K562 (cell line): ENCODE measurements at regions of chr2 and their contacts with region 1.

Region 1: DNA sequence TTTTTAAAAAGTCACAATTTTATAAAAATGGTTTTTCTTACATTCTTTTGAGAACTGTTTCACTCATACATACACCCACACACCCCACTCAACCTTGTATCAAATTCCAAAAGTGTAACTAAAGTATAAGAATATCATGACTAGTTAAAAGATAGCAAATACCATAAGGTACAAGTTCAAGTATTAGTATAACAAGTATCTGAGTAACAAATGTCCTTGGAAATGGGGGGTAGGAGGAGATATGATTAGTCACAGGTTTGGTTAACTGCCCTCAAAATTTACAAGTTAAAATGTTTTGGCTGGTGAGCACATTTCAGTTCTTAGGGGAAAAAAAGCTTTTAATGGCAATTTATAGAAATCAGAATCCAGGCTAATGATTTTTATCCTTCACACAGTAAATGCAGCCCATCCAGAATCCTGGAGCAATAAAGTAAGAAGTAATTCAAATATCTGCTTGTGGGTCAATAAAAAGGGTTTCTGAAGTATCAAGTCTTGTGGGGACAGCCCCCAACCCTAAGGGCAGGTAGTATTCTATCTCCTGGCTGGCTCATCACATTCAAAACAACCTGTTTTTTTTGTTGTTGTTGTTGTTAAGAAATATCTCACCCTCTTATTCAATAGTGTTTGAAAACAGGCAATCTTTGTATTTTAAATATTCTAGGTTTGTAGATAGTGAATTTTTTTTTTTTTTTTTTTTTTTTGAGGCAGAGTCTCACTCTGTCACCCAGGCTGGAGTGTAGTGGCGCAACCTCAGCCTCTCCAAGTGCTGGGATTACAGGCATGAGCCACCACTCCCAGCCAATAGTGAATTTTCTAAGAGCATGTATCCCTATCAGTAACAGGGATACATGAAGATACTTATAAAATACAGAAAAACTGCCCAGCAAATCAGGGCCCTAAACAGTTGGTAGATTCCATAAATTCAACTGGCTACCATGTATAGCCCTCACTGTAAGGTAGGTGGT is 14.5 kb downstream of the IAH1 start:
- DNase-seq: no peak
- ATAC-seq: no peak
- H3K4me3 ChIP-seq: no peak overlapping the region
- H3K27ac ChIP-seq: no peak overlapping the region
- H3K4me1 ChIP-seq: no peaks in the 10 kb centered on the region
- H3K27me3 ChIP-seq: no peaks in the 10 kb centered on the region
- CTCF ChIP-seq: no peak
- EP300 ChIP-seq: no peak
- POLR2A ChIP-seq: no peak
- RAD21 ChIP-seq: no peak

Region 2: GRCh38 chr2:9347411-9347881 is 141.4 kb before region 1 on chr2:
- CTCF ChIA-PET with region 1: no interaction called
- POLR2A ChIA-PET with region 1: no interaction called
- in situ Hi-C with region 1: no loop called
- intact Hi-C with region 1: no loop called
- DNase-seq: no peak
- ATAC-seq: no peak
- H3K4me3 ChIP-seq: no peak overlapping the region
- H3K27ac ChIP-seq: no peak overlapping the region
- H3K4me1 ChIP-seq: peaks cover 0 to 3% of the 10 kb centered on the region in 2 experiments; a peak in 1 of 5 replicates
- H3K27me3 ChIP-seq: peaks cover 2 to 10% of the 10 kb centered on the region in 2 experiments; a peak in 1 of 5 replicates
- CTCF ChIP-seq: no peak
- EP300 ChIP-seq: no peak
- POLR2A ChIP-seq: no peak
- RAD21 ChIP-seq: no peak

Region 3: DNA sequence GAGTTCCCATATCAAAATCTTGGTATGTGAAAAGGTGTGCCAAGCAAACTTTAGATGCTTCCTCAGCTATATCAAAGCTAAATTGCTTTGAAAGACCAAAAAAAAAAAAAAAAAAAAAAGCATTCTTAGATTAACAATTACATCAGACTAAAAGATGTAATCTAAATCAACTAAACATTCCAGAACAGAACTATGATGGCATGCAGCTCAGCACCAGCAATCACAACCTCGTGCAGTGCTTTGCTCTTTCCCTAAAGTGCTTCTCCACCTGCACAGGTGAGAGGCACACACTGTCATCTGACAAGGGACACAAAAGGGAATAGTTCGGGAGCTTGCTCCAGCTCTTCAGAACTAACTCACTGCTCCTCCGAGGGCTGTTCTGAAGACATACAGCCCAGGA is 29.3 kb after region 1 on chr2:
- CTCF ChIA-PET with region 1: no interaction called
- POLR2A ChIA-PET with region 1: interaction called, 13 read pairs
- in situ Hi-C with region 1: no loop called
- intact Hi-C with region 1: no loop called
- DNase-seq: no peak
- ATAC-seq: peak; percentile 25; the same call in 2 of the 3 replicates
- H3K4me3 ChIP-seq: no peak overlapping the region
- H3K27ac ChIP-seq: no peak overlapping the region
- H3K4me1 ChIP-seq: peaks cover 0 to 14% of the 10 kb centered on the region in 2 experiments; a peak in 3 of 5 replicates
- H3K27me3 ChIP-seq: no peaks in the 10 kb centered on the region
- CTCF ChIP-seq: no peak
- EP300 ChIP-seq: no peak
- POLR2A ChIP-seq: no peak
- RAD21 ChIP-seq: no peak

Region 4: DNA sequence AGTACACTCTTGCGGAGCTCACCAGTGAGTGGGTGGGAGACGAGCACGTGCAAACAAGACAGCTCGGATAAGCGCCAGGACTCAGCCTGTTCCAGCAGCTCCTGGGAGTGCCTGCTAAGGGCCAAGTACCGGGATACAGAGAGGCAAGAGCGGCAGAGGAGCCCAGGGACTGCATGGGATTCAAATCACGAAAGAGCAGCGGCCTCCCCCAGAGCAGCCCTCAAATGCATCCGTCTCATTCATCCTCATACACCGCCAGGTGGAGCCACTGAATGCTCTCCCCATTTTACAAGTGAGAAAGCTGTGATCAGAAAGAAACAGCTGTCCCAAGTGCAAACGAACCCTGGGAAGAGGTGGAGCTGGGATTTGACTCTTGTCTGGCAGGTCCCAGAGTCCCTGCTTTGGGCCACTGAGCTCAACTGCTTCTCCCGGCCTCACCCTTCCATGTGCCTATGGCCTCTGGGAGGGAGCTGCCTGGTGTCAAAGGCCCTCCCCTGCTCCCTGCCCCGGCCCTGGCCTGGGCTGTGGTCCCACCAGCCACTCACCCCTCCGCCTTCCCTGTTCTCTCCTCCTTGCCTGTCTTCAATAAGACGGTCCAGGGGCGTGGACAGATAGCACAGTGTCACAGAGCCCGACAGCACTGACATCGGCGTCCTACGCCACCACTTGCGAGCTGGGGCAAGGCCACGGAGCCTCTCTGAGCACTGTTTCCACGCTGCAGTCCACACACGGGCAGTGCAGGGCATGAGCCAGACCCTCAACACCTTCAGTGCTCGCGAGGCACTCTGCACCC is 281.6 kb after region 1 on chr2:
- CTCF ChIA-PET with region 1: no interaction called
- POLR2A ChIA-PET with region 1: no interaction called
- in situ Hi-C with region 1: no loop called
- intact Hi-C with region 1: loop called (anchors 10 kb)
- DNase-seq: peak; percentile 76 to 83 (median 78)
- ATAC-seq: peak; percentile 86
- H3K4me3 ChIP-seq: no peak overlapping the region
- H3K27ac ChIP-seq: no peak overlapping the region
- H3K4me1 ChIP-seq: peaks cover 20 to 51% of the 10 kb centered on the region in 2 experiments; a peak in 4 of 5 replicates
- H3K27me3 ChIP-seq: no peaks in the 10 kb centered on the region; a peak in 1 of 5 replicates
- CTCF ChIP-seq: peak; percentile 80 to 83 (median 82)
- EP300 ChIP-seq: no peak
- POLR2A ChIP-seq: no peak
- RAD21 ChIP-seq: peak; percentile 50 to 68